ENCODE measurements at regions of chr3 and their contacts with region 1.

Region 1: GRCh38 chr3:113736548-113737089 is 9.4 kb downstream of the NAA50 start:
- DNase-seq: peak; percentile 60
- ATAC-seq: peak; percentile 83
- H3K4me3 ChIP-seq: no peak overlapping the region
- H3K27ac ChIP-seq: peak overlapping the region; percentile 36
- H3K4me1 ChIP-seq: peaks cover 63% of the 10 kb centered on the region
- H3K27me3 ChIP-seq: no peaks in the 10 kb centered on the region
- CTCF ChIP-seq: peak; percentile 61
- EP300 ChIP-seq: no peak
- POLR2A ChIP-seq: no peak; a peak in 1 of 4 replicates
- RAD21 ChIP-seq: peak; percentile 83

Region 2: GRCh38 chr3:113663324-113663750 is 73.3 kb before region 1 on chr3:
- CTCF ChIA-PET with region 1: no interaction called
- POLR2A ChIA-PET with region 1: no interaction called
- in situ Hi-C with region 1: no loop called
- intact Hi-C with region 1: loop called (anchors 2 kb)
- DNase-seq: peak; percentile 94
- ATAC-seq: peak; percentile 97
- H3K4me3 ChIP-seq: peak overlapping the region; percentile 11 to 33 (median 30); a peak in 4 of 6 replicates
- H3K27ac ChIP-seq: peak overlapping the region; percentile 88
- H3K4me1 ChIP-seq: peaks cover 42% of the 10 kb centered on the region
- H3K27me3 ChIP-seq: no peaks in the 10 kb centered on the region
- CTCF ChIP-seq: no peak
- EP300 ChIP-seq: peak in 1 of 2 experiments; percentile 82; a peak in 2 of 4 replicates
- POLR2A ChIP-seq: 0 out of 4 replicates have a peak, but pooled peaks of 1 of the 2 experiments have one; percentile 15
- RAD21 ChIP-seq: no peak

Region 3: DNA sequence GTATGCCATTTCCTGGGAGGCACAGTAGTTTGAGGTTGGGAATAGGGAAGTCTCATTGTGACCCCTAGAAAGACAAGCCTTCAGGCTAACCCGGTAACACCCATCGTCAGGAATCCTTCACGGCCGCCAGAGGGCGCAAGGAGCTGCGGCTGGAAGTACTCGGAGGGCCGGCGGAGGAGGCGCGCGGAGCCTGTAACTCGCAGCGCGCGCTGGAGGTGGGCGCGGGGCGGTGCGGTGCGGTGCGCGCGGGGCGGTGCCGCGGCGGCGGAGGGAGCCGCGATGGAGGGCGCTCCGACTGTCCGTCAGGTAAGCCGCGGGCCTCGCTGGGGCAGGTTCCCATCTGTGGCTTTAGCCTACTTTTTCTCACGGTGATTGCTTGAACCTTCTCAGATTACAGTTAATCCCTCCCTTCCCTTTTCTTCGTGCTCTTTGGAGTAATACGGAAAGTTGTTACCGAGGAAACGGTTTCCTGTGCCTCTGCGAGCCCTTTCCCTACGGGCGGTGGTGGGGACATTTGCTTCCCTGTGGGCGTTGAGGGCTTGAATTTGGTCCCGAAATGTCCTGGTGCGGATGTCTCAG is 102.1 kb after region 1 on chr3 and contains the start of gene GRAMD1C:
- CTCF ChIA-PET with region 1: interaction called, 13 read pairs
- POLR2A ChIA-PET with region 1: no interaction called
- in situ Hi-C with region 1: loop called (anchors 10 kb)
- intact Hi-C with region 1: loop called (anchors 2 kb)
- DNase-seq: peak; percentile 72
- ATAC-seq: peak; percentile 98
- H3K4me3 ChIP-seq: peak within 1 kb of the TSS; percentile 44 to 77 (median 57)
- H3K27ac ChIP-seq: no peak within 1 kb of the TSS
- H3K4me1 ChIP-seq: peaks cover 26% of the 10 kb centered on the region
- H3K27me3 ChIP-seq: peaks cover 0 to 6% of the 10 kb centered on the region in 2 experiments; a peak in 4 of 5 replicates
- CTCF ChIP-seq: peak; percentile 90
- EP300 ChIP-seq: no peak
- POLR2A ChIP-seq: no peak
- RAD21 ChIP-seq: peak; percentile 83
- total RNA-seq, gene GRAMD1C: not detected in 2 replicates

Region 4: GRCh38 chr3:113867506-113867905 is 130.9 kb after region 1 on chr3:
- CTCF ChIA-PET with region 1: no interaction called
- POLR2A ChIA-PET with region 1: no interaction called
- in situ Hi-C with region 1: no loop called
- intact Hi-C with region 1: no loop called
- DNase-seq: no peak
- ATAC-seq: no peak
- H3K4me3 ChIP-seq: no peak overlapping the region
- H3K27ac ChIP-seq: no peak overlapping the region
- H3K4me1 ChIP-seq: no peaks in the 10 kb centered on the region
- H3K27me3 ChIP-seq: no peaks in the 10 kb centered on the region
- CTCF ChIP-seq: no peak
- EP300 ChIP-seq: no peak
- POLR2A ChIP-seq: no peak
- RAD21 ChIP-seq: no peak

Region 5: GRCh38 chr3:113912552-113913236 is 176.1 kb after region 1 on chr3:
- CTCF ChIA-PET with region 1: interaction called, 11 read pairs
- POLR2A ChIA-PET with region 1: no interaction called
- in situ Hi-C with region 1: loop called (anchors 5 kb)
- intact Hi-C with region 1: loop called (anchors 1 kb)
- DNase-seq: peak; percentile 69
- ATAC-seq: peak; percentile 96
- H3K4me3 ChIP-seq: no peak overlapping the region
- H3K27ac ChIP-seq: no peak overlapping the region
- H3K4me1 ChIP-seq: no peaks in the 10 kb centered on the region
- H3K27me3 ChIP-seq: 0 out of 5 replicates have a peak, but pooled peaks cover 0 to 8% of the 10 kb centered on the region in 2 experiments
- CTCF ChIP-seq: peak; percentile 85
- EP300 ChIP-seq: no peak
- POLR2A ChIP-seq: no peak
- RAD21 ChIP-seq: peak; percentile 76